ENCODE measurements at regions of chr14 and their contacts with region 1.

Region 1: GRCh38 chr14:60734465-60735242 is at the start of gene MNAT1:
- DNase-seq: peak; percentile 62 to 88 (median 78)
- ATAC-seq: peak; percentile 98
- H3K4me3 ChIP-seq: peak within 1 kb of the TSS; percentile 83 to 84
- H3K4me3 Mint-ChIP-seq: peak within 1 kb of the TSS; percentile 100
- H3K27ac ChIP-seq: peak within 1 kb of the TSS; percentile 40 to 56
- H3K27ac Mint-ChIP-seq: peak within 1 kb of the TSS; percentile 95
- H3K4me1 ChIP-seq: peaks cover 19% of the 10 kb centered on the region
- H3K4me1 Mint-ChIP-seq: peaks cover 36% of the 10 kb centered on the region
- H3K27me3 ChIP-seq: no peaks in the 10 kb centered on the region
- H3K27me3 Mint-ChIP-seq: peaks cover 12% of the 10 kb centered on the region
- CTCF ChIP-seq: no peak
- total RNA-seq, gene MNAT1: 12.0 to 14.5 TPM

Region 2: DNA sequence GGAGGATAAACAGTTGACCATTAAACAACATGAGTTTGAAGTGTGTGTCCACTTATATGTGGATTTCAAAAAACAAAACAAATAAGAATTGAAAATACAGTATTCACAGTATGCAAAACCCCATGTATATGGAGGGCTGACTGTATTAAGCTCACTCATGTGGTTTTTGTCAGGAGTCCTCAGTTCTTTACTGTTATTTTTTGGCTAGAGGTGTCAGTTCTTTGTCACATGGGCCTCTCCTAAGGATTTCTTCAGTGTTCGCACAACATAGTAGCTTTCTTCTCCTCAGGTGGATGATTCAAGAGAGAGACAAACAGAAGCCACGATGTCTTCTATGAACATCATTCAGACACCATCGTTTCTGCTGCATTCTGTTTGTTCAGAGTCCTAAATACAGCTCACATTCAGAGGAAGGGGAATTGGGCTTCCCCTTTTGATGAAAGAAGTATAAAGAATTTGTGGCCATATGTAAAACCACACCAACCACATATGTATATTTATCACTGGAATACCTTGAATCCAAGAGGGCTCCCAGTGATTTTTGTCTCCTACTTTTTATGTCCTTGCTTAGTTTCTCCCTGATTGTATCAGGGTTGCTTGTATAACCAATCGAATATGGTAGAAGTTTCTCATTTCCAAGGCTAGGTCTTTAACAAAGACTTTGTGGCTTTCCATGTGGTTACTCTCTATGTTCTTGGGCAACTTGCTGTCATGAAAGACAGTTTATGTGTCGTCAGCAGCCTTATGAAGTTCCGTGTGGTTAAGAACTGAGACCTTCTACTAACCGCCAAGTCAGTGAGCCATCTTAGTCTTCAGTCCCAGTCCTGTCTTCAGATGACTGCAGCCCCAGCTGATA is 18.8 kb after region 1 on chr14:
- CTCF ChIA-PET with region 1: no interaction called
- POLR2A ChIA-PET with region 1: no interaction called
- intact Hi-C with region 1: loop called (anchors 1 to 2 kb)
- DNase-seq: peak; percentile 17 to 95 (median 55)
- ATAC-seq: peak; percentile 90
- H3K4me3 ChIP-seq: peak overlapping the region in 1 of 2 experiments; percentile 6
- H3K4me3 Mint-ChIP-seq: peak overlapping the region; percentile 64
- H3K27ac ChIP-seq: peak overlapping the region in 1 of 2 experiments; percentile 48
- H3K27ac Mint-ChIP-seq: peak overlapping the region; percentile 82
- H3K4me1 ChIP-seq: peaks cover 22% of the 10 kb centered on the region
- H3K4me1 Mint-ChIP-seq: peaks cover 38% of the 10 kb centered on the region
- H3K27me3 ChIP-seq: no peaks in the 10 kb centered on the region
- H3K27me3 Mint-ChIP-seq: peaks cover 4% of the 10 kb centered on the region
- CTCF ChIP-seq: no peak

Region 3: DNA sequence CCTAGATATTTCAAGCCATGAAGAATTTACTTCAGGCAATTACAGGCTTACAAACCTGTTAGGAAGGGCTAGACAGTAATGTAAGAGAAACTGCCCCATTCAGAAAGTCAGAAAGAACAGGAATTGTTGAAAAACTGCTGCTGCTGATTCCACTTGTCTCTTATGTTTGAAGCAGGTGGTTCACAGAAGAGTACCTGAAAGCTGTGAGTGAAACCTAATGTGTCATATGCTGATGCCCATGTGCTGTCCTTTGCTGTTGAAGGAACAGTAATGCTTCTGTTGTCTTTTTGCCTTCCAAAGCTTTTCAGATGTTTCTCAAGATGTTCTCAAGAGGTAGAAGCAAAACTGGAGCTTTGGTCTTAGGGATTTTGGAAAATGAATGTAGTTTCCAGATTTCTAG is 38.9 kb after region 1 on chr14:
- CTCF ChIA-PET with region 1: no interaction called
- POLR2A ChIA-PET with region 1: no interaction called
- intact Hi-C with region 1: loop called in 1 of 2 experiments (anchors 5 kb)
- DNase-seq: no peak
- ATAC-seq: no peak
- H3K4me3 ChIP-seq: no peak overlapping the region
- H3K4me3 Mint-ChIP-seq: no peak overlapping the region
- H3K27ac ChIP-seq: no peak overlapping the region
- H3K27ac Mint-ChIP-seq: no peak overlapping the region
- H3K4me1 ChIP-seq: no peaks in the 10 kb centered on the region
- H3K4me1 Mint-ChIP-seq: peaks cover 6% of the 10 kb centered on the region
- H3K27me3 ChIP-seq: no peaks in the 10 kb centered on the region
- H3K27me3 Mint-ChIP-seq: no peaks in the 10 kb centered on the region
- CTCF ChIP-seq: no peak

Region 4: GRCh38 chr14:60980811-60981632 is 246.4 kb after region 1 on chr14 and contains the starts of genes SLC38A6 and TRMT5:
- CTCF ChIA-PET with region 1: no interaction called
- POLR2A ChIA-PET with region 1: interaction called, 6 read pairs
- intact Hi-C with region 1: loop called in 1 of 2 experiments (anchors 5 kb)
- DNase-seq: peak; percentile 79 to 94 (median 91)
- ATAC-seq: peak; percentile 88
- H3K4me3 ChIP-seq: peak within 1 kb of the TSS; percentile 94 to 98
- H3K4me3 Mint-ChIP-seq: no peak within 1 kb of the TSS
- H3K27ac ChIP-seq: peak within 1 kb of the TSS; percentile 90 to 92
- H3K27ac Mint-ChIP-seq: no peak within 1 kb of the TSS
- H3K4me1 ChIP-seq: peaks cover 23% of the 10 kb centered on the region
- H3K4me1 Mint-ChIP-seq: peaks cover 25% of the 10 kb centered on the region
- H3K27me3 ChIP-seq: no peaks in the 10 kb centered on the region
- H3K27me3 Mint-ChIP-seq: no peaks in the 10 kb centered on the region
- CTCF ChIP-seq: no peak
- total RNA-seq, gene SLC38A6: 8.3 to 8.5 TPM
- total RNA-seq, gene TRMT5: 1.8 to 1.9 TPM

Region 5: GRCh38 chr14:61280526-61281185 is 546.0 kb after region 1 on chr14:
- CTCF ChIA-PET with region 1: no interaction called
- POLR2A ChIA-PET with region 1: no interaction called
- intact Hi-C with region 1: loop called in 1 of 2 experiments (anchors 10 kb)
- DNase-seq: peak; percentile 63 to 90 (median 79)
- ATAC-seq: peak; percentile 85
- H3K4me3 ChIP-seq: peak overlapping the region; percentile 64 to 66
- H3K4me3 Mint-ChIP-seq: peak overlapping the region; percentile 93
- H3K27ac ChIP-seq: peak overlapping the region; percentile 71 to 82
- H3K27ac Mint-ChIP-seq: peak overlapping the region; percentile 95
- H3K4me1 ChIP-seq: peaks cover 15% of the 10 kb centered on the region
- H3K4me1 Mint-ChIP-seq: peaks cover 33% of the 10 kb centered on the region
- H3K27me3 ChIP-seq: no peaks in the 10 kb centered on the region
- H3K27me3 Mint-ChIP-seq: peaks cover 1% of the 10 kb centered on the region
- CTCF ChIP-seq: peak; percentile 62

Region 6: DNA sequence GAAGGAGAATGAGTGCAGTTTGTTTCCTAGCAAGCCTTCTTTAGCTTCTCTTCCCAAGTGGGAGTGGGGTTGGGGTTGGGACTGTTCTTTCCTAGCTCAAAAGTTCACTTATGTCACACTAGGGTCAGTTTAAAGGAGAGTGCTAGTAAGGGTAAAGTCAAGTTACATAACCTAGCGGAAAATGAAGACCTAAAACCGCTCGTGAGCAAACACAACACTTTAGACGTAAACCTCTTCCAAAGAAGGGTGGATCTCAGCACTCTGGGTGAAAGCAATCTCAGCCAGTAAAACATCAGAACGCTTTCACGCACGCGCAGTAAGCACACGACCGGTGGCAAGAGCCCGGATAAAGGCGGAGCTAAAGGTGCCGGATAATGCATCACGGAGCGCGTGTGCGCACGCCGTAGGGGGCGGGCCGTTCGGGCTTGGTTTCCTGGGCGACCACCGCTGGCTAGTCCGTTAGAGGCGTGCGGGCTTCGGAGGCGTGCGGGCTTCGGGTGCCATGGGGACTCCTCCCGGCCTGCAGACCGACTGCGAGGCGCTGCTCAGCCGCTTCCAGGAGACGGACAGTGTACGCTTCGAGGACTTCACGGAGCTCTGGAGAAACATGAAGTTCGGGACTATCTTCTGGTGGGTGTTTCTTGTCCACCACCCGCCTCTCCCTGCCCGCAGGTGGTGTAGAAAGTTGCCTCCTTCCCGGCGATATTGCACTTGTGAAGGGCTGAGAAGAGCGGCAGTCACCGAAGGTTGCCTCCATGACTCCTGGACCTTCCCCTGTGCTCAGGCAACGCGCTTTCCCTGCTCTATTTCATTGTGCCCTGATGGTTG is 1027.5 kb after region 1 on chr14 and contains the start of gene SNAPC1:
- CTCF ChIA-PET with region 1: no interaction called
- POLR2A ChIA-PET with region 1: no interaction called
- intact Hi-C with region 1: loop called in 1 of 2 experiments (anchors 2 kb)
- DNase-seq: peak; percentile 96 to 100 (median 98)
- ATAC-seq: peak; percentile 91
- H3K4me3 ChIP-seq: peak within 1 kb of the TSS; percentile 87 to 90
- H3K4me3 Mint-ChIP-seq: peak within 1 kb of the TSS; percentile 98
- H3K27ac ChIP-seq: peak within 1 kb of the TSS; percentile 84 to 95
- H3K27ac Mint-ChIP-seq: peak within 1 kb of the TSS; percentile 100
- H3K4me1 ChIP-seq: peaks cover 31% of the 10 kb centered on the region
- H3K4me1 Mint-ChIP-seq: peaks cover 48% of the 10 kb centered on the region
- H3K27me3 ChIP-seq: no peaks in the 10 kb centered on the region
- H3K27me3 Mint-ChIP-seq: no peaks in the 10 kb centered on the region
- CTCF ChIP-seq: no peak
- total RNA-seq, gene SNAPC1: 6.8 to 7.4 TPM

Measured in CD8-positive, alpha-beta T cell (primary cell).